Activated naive CD4-positive, alpha-beta T cell treated with anti-CD3 and anti-CD28 coated beads for 36 hours (primary cell): ENCODE measurements at regions of chr6 and their contacts with region 1.

Region 1: GRCh38 chr6:27772261-27773001 is 139.8 kb downstream of the OR2B2 start:
- DNase-seq: peak; percentile 92
- H3K4me3 Mint-ChIP-seq: no peak overlapping the region
- H3K27ac Mint-ChIP-seq: no peak overlapping the region
- H3K4me1 Mint-ChIP-seq: peaks cover 6% of the 10 kb centered on the region
- H3K27me3 Mint-ChIP-seq: peaks cover 16% of the 10 kb centered on the region

Region 2: GRCh38 chr6:27760464-27760863 is 12.0 kb before region 1 on chr6:
- CTCF ChIA-PET with region 1: interaction called, 22 read pairs
- intact Hi-C with region 1: loop called (anchors 2 kb)
- DNase-seq: no peak
- H3K4me3 Mint-ChIP-seq: no peak overlapping the region
- H3K27ac Mint-ChIP-seq: no peak overlapping the region
- H3K4me1 Mint-ChIP-seq: peaks cover 28% of the 10 kb centered on the region
- H3K27me3 Mint-ChIP-seq: no peaks in the 10 kb centered on the region

Region 3: GRCh38 chr6:27785294-27785693 is 12.9 kb after region 1 on chr6:
- CTCF ChIA-PET with region 1: interaction called, 20 read pairs
- intact Hi-C with region 1: no loop called
- DNase-seq: no peak
- H3K4me3 Mint-ChIP-seq: no peak overlapping the region
- H3K27ac Mint-ChIP-seq: no peak overlapping the region
- H3K4me1 Mint-ChIP-seq: no peaks in the 10 kb centered on the region
- H3K27me3 Mint-ChIP-seq: peaks cover 12% of the 10 kb centered on the region

Region 4: DNA sequence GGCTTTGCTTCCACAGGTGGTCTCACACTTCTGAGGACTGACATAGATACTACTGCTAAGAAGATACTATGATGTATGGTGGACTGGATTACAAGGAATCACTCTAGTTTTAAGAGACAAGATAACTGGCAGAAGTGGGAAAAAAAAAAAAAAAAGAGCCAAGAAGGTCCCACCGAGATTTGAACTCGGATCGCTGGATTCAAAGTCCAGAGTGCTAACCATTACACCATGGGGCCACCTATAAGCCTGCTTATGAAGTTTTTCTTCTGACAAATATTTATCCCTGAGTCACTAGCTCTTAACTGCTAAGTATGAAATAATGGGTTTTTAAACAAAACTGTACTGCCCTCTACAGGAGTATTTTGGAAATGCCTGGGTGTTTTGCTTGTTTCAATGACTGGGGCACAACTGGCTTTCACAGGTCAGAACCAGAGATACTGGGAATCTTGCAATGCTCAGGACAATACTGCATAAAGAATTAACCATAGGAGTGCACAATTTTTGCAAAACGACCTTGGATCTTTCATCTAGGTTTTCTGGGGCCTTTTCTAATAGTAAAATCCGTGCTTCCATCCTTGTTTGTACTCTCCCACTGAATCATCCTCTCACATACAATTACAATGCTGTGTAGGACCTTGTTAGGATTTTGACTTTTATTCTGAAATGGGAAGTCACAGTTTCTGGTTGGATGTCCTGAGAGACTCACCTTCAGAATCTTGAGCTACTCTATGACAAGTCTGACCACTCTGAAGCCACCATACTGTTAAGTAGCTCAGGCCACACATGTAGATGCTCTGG is 23.5 kb after region 1 on chr6:
- CTCF ChIA-PET with region 1: interaction called, 38 read pairs
- intact Hi-C with region 1: no loop called
- DNase-seq: peak; percentile 59
- H3K4me3 Mint-ChIP-seq: no peak overlapping the region
- H3K27ac Mint-ChIP-seq: no peak overlapping the region
- H3K4me1 Mint-ChIP-seq: peaks cover 16% of the 10 kb centered on the region
- H3K27me3 Mint-ChIP-seq: peaks cover 5% of the 10 kb centered on the region

Region 5: DNA sequence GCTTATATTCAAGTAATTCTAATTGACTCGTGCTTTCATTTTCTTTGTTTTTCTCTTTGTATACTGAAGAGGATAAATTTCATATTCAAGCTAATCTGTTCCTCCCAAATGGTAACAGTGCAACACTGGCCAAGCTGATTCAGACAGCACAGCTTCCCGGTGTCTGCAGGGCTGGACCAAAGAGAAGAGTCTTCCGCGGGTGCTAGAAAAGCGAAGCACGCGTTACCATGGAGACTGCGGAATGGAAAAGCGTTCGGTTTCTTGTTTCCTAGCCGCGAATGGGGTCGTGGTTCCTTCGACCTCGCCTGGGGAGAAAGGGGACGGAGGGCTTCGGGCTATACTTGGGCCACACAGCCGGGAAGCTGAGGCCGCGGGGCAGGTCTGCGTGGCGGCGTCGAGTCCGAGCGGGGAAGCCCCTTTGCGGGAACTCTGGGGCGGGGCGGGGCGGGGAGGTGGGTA is 1238.9 kb after region 1 on chr6:
- CTCF ChIA-PET with region 1: no interaction called
- intact Hi-C with region 1: no loop called
- DNase-seq: peak; percentile 65
- H3K4me3 Mint-ChIP-seq: peak overlapping the region; percentile 87
- H3K27ac Mint-ChIP-seq: peak overlapping the region; percentile 21
- H3K4me1 Mint-ChIP-seq: peaks cover 9% of the 10 kb centered on the region
- H3K27me3 Mint-ChIP-seq: peaks cover 11% of the 10 kb centered on the region